Testis (tissue), 5 donors: ENCODE measurements at regions of chr7 and their contacts with region 1.

Region 1: DNA sequence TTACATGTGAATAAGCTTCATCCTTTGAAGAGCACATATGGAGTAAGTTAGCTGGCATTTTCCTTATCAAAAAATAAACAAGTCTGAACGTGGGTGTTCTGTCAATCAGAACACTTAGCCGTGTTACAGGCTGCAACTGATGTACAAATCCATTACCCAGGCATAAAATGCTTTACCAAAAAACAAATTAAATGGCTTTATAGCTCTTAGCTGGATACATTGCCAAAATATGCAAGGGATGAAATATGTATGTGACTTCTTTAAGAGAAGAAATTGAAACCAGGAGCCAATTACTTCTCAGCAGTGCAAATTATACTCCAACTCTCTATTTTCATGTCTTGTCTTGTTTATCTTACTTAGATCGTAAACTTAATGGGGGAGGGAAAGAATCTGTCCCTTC is 214.8 kb downstream of the DGKB start:
- DNase-seq: no peak
- H3K4me3 ChIP-seq: no peak overlapping the region
- H3K27ac ChIP-seq: no peak overlapping the region
- H3K4me1 ChIP-seq: no peaks in the 10 kb centered on the region
- H3K27me3 ChIP-seq: no peaks in the 10 kb centered on the region
- CTCF ChIP-seq: no peak
- POLR2A ChIP-seq: no peak

Region 2: GRCh38 chr7:13279854-13280435 is 1407.8 kb before region 1 on chr7:
- intact Hi-C with region 1: loop called (anchors 10 kb)
- DNase-seq: no peak
- H3K4me3 ChIP-seq: no peak overlapping the region
- H3K27ac ChIP-seq: no peak overlapping the region
- H3K4me1 ChIP-seq: no peaks in the 10 kb centered on the region
- H3K27me3 ChIP-seq: no peaks in the 10 kb centered on the region
- CTCF ChIP-seq: peak in 2 of 3 experiments; percentile 14 to 53
- POLR2A ChIP-seq: no peak